GM10248 (cell line): ENCODE measurements at regions of chr15 and their contacts with region 1.

Region 1: DNA sequence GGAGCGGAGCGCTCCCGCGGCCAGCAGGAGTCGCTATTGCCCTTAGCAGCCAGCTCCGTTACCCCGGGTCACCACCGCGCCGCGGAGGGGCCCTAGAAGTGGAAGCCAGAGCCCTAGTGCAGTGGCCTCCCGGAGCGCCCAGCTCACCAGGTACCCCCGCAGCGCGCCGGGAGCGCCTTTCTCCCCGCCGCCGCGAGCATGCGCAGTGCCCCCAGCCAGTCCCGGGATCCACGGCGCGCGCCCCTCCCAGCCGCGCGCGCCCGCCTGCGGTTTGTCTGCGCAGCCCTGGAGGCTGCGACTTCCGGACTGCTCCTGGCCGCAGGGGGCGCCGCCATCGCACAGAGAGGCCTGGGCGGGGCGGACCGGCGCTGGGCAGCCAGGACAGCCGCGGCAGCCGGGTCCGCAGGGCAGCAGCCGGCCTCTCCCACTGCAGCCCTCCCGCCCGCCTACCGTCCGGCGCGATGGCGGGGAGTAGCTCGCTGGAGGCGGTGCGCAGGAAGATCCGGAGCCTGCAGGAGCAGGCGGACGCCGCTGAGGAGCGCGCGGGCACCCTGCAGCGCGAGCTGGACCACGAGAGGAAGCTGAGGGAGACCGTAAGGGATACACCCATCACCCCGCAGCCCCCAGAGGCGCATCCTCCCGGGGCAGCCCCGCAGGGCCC is 5.7 kb downstream of the TPM1 start:
- DNase-seq: peak; percentile 94
- CTCF ChIP-seq: peak; percentile 97

Region 2: DNA sequence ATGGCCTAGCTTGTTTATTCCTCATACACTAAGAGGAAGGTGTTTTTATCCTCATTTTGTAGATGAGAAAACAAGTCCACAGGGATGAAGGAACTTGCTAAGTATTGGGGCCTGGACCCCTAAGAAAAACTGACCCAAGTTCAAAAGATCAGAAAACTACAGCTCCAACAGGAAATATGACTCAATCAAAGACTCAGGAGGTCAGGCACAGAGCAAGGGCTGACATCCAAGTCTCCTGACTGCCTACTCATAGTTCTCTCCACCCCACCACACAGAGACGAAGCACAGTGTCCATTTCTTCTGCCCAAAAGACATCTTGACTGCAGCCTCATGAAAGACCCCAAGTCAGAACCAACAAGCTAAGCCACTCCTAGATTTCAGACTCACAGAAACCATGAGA is 32.6 kb before region 1 on chr15:
- CTCF ChIA-PET with region 1: interaction called, 18 read pairs
- POLR2A ChIA-PET with region 1: no interaction called
- DNase-seq: no peak
- CTCF ChIP-seq: no peak

Region 3: DNA sequence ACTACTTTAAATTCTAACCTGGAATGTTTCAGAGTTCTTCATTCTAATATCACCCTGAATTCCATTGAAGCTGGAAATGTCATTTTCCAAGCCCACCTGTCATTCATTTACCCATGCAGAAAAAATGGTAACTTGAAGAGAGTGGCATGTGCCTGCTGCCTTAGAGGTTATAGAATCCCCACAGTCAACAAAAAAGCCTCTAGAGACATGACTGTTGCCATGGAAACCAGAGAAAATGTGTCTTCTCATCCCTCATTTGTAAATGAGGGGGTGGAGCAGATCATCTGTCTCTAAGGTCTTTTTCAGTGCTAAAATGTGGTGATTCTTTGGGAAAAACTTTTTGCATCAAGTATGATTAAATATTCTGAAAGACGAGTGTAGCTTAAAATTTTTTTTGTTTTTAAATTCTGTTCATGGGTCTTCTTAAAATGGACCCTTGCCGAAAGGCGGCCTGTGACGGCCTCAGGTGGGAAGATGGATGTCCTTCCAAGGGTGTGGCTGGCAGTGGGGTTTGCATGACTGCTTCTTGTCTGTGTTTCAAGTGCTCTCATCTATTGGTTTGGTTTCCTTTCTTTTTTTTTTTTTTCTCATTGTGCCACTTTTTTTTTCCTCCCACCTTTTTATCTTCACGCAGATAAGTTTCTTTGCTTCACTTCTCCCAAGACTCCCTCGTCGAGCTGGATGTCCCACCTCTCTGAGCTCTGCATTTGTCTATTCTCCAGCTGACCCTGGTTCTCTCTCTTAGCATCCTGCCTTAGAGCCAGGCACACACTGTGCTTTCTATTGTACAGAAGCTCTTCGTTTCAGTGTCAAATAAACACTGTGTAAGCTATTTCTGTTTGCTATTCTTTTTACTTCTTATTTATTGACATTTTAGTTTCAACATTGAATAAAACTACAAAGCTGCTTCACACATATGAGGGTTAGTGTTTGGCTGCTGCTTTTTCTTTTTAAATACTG is 17.3 kb after region 1 on chr15:
- CTCF ChIA-PET with region 1: interaction called, 57 read pairs
- POLR2A ChIA-PET with region 1: no interaction called
- DNase-seq: no peak
- CTCF ChIP-seq: no peak

Region 4: DNA sequence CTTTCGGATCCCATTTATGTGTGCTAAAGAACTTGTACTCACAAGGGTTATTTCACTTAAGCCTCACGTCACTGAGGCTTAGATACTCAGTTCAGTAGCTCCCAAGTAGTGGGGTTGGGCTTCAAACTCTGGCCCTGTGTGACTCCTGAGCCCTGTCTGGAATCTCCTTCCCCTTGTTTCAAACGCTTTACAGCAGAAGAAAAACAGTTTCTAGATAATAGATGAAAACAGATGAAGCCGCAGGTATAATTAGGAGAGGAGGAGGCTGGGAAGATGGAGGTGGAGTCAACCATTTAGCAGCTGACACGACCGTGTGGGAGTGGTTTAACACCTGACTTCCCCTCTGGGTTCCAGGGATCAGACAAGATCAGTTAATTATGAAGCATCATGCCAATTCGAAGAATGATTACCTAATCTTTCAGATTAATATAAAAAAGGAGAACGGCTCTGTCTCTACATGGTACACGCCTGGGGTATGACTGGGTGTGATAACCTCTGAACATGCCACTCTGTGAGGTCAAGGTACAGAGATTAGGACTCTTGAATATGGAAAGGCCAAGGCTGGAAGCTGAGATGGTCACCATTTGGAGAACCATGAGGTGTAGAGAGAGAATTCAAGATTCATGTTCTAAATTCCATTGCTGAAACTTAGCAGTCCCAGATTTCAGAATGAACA is 25.4 kb after region 1 on chr15:
- CTCF ChIA-PET with region 1: interaction called, 16 read pairs
- POLR2A ChIA-PET with region 1: no interaction called
- DNase-seq: no peak
- CTCF ChIP-seq: no peak

Region 5: DNA sequence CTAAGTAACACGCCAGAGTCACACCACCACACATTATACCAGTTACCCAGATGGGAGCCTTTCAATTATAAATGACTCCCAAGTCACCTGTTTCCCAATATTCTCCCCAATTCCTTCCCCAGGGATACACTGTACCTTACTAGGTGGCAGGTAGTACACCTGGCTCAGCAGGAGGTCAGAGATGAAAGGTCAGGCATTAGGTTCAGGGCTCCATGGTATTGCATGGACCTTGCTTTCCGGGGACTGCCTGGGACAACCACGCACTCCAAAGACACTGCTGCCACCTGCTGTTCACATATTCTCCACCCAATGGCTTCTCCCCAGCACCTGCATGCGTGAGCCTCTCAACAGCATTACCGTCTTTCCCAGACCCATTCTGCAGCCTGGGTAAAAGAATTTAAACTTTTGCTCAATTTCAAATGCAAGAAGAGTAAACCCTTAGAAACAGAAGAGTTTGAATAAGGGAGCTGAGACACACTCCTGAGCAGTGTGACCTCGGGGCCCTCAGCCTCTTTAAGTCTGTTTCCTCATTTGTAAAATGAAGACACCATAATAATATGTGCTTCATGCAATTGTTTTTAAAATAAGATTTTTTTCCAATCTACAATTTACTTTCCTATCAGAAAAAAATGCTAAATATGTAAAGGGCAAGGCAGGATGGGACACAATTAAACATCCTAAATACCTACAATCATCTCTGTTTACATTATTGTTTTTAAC is 45.4 kb after region 1 on chr15:
- CTCF ChIA-PET with region 1: interaction called, 164 read pairs
- POLR2A ChIA-PET with region 1: no interaction called
- DNase-seq: peak; percentile 78
- CTCF ChIP-seq: peak; percentile 86

Region 6: DNA sequence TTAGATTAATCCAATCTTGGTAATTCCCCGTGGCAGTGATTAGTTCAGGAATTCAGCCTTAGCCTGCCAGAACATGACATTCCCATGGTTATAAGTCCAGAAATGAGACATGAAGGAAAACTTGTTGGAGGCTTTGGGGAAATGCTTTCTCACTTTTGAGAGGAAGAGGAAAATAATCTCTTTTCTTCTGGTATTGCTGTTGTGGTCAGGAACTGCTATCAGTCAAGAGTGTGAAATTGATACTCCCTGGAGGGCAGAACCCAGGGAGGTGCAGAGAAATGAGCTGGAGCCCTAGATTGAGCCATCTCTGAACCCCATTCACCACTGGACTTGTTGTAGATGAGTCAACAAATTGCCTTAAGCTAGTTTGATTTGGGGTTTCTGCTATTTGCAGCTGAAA is 190.6 kb after region 1 on chr15:
- CTCF ChIA-PET with region 1: no interaction called
- POLR2A ChIA-PET with region 1: no interaction called
- DNase-seq: peak; percentile 28
- CTCF ChIP-seq: no peak

Region 7: DNA sequence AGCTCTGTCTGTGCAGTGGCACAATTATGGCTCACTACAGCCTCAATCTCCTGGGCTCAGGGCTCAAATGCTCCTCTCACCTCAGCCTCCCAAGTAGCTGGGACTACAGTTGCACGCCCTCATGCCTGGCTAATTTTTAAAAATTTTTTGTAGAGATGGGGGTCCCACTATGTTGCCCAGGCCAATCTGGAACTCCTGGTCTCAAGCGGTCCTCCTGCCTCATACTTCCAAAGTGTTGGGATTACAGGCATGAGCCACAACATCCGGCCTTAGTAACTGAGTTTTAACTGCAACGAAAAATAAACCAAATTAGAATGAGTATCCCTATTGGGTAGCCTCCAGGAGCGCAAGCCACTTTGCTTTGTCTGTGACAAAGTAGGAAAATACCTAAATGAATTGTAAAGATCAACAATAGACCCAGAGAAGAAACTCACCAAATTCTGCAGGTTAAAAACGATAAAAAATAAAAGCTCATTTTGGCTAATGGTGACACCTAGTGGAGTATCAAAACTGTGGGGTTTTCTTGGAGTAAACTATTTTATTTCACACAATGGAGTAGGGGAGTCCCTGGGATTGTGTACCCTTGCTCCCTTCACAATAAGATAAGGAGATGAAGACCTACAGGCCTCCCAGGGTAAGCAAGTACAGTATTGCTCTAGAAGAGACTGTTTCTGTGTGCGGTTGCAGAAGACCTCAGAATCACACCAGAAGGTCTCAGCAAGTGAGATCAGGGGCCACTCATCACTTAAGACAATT is 354.4 kb after region 1 on chr15:
- CTCF ChIA-PET with region 1: interaction called, 22 read pairs
- POLR2A ChIA-PET with region 1: no interaction called
- DNase-seq: peak; percentile 45
- CTCF ChIP-seq: peak; percentile 40